Activated CD8-positive, alpha-beta T cell treated with anti-CD3 and anti-CD28 coated beads for 36 hours (primary cell): ENCODE measurements at regions of chr10 and their contacts with region 1.

Region 1: GRCh38 chr10:30529373-30529998 is 95.5 kb downstream of the MAP3K8 start:
- DNase-seq: peak; percentile 93
- ATAC-seq: peak; percentile 85
- H3K4me3 Mint-ChIP-seq: peak overlapping the region; percentile 75
- H3K27ac Mint-ChIP-seq: peak overlapping the region; percentile 96
- H3K4me1 Mint-ChIP-seq: peaks cover 62% of the 10 kb centered on the region
- H3K27me3 Mint-ChIP-seq: no peaks in the 10 kb centered on the region
- CTCF ChIP-seq: no peak

Region 2: DNA sequence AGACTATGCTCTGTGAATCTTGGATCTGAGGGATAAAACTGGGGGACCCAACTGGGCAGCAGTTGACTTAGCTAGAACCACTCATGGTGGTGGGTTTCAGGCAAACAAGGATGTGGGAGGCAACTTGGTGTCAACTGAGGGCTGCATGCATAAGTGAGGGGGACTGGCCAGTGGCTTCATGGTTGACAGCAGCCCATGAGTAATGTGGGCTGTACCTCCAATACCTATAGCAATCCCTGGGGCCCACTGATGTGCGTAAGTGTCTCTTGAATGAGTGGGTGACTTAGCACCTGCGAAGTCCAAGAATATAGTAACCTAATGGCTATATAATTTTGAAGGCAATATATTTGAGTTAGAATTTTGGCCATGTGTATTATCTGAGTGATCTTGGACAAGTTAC is 109.2 kb before region 1 on chr10:
- CTCF ChIA-PET with region 1: interaction called, 13 read pairs
- POLR2A ChIA-PET with region 1: interaction called, 7 read pairs
- intact Hi-C with region 1: loop called (anchors 2 kb)
- DNase-seq: no peak
- ATAC-seq: no peak
- H3K4me3 Mint-ChIP-seq: no peak overlapping the region
- H3K27ac Mint-ChIP-seq: no peak overlapping the region
- H3K4me1 Mint-ChIP-seq: peaks cover 35% of the 10 kb centered on the region
- H3K27me3 Mint-ChIP-seq: no peaks in the 10 kb centered on the region
- CTCF ChIP-seq: no peak

Region 3: DNA sequence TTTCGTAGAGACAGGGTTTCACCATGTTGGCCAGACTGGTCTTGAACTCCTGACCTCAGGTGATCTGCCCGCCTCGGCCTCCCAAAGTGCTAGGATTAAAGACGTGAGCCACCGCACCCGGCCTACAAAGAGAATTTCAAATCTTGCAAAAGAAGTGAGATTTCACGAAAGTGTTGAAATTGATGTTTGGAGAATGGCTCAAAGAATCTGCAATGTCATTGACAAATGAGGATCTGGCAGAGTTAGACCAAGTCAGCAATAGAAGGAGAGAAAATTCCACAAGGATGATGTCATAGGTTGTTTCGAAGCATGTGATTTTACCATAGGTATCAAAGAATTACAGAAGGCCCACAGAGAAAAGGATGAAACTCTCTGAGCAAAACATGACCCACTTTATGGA is 28.4 kb after region 1 on chr10:
- CTCF ChIA-PET with region 1: no interaction called
- POLR2A ChIA-PET with region 1: no interaction called
- intact Hi-C with region 1: no loop called
- DNase-seq: no peak
- ATAC-seq: no peak
- H3K4me3 Mint-ChIP-seq: no peak overlapping the region
- H3K27ac Mint-ChIP-seq: no peak overlapping the region
- H3K4me1 Mint-ChIP-seq: no peaks in the 10 kb centered on the region
- H3K27me3 Mint-ChIP-seq: peaks cover under 1% of the 10 kb centered on the region
- CTCF ChIP-seq: no peak

Region 4: DNA sequence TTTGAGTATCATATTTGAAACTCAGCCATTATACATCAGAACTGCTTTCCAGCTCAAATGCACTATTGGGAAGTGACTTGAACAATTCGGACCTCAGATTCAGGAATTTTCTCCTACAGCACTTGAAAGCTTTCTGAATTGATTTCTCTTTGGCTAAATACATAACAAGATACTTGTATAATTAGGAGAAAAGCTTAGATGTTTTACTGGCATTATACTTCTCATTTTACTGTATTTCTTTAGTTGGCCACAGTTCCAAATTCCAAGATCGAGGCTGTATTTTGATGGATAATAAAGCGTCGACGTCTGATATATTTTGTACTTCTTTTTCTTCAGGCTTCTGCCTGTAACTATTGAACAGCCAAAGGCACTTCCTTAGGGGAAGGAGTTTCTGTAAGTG is 126.7 kb after region 1 on chr10:
- CTCF ChIA-PET with region 1: no interaction called
- POLR2A ChIA-PET with region 1: no interaction called
- intact Hi-C with region 1: no loop called
- DNase-seq: no peak
- ATAC-seq: no peak
- H3K4me3 Mint-ChIP-seq: no peak overlapping the region
- H3K27ac Mint-ChIP-seq: no peak overlapping the region
- H3K4me1 Mint-ChIP-seq: no peaks in the 10 kb centered on the region
- H3K27me3 Mint-ChIP-seq: peaks cover 35% of the 10 kb centered on the region
- CTCF ChIP-seq: no peak

Region 5: DNA sequence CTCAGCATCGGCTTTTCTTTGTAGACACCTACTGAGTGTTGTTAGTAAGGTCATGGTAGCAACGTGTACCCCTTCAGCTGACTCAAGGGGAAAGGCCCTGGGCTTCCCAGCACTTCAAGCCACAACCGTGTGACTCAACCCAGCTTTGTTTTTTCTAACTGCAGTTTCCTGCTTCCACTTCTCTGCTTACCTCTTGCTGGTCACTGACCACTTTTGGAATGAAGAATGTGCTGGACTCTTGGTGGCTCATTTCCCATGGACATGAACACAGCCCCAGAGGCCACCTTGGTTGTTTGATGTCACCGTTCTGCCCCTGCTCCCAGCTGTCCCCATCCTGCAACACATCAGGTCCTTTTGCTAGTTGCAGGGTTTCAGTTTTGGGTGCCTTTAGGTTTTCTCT is 571.6 kb after region 1 on chr10:
- CTCF ChIA-PET with region 1: no interaction called
- POLR2A ChIA-PET with region 1: no interaction called
- intact Hi-C with region 1: no loop called
- DNase-seq: peak; percentile 87
- ATAC-seq: peak; percentile 99
- H3K4me3 Mint-ChIP-seq: peak overlapping the region; percentile 27
- H3K27ac Mint-ChIP-seq: peak overlapping the region; percentile 85
- H3K4me1 Mint-ChIP-seq: peaks cover 29% of the 10 kb centered on the region
- H3K27me3 Mint-ChIP-seq: peaks cover 2% of the 10 kb centered on the region
- CTCF ChIP-seq: no peak